ENCODE measurements at regions of chr9 and their contacts with region 1.

Region 1: GRCh38 chr9:104895572-104895971 is 32.4 kb downstream of the ABCA1 start:
- DNase-seq: peak; percentile 91
- H3K4me3 ChIP-seq: no peak overlapping the region
- H3K27ac ChIP-seq: peak overlapping the region; percentile 46
- H3K4me1 ChIP-seq: peaks cover 47% of the 10 kb centered on the region
- H3K27me3 ChIP-seq: no peaks in the 10 kb centered on the region
- CTCF ChIP-seq: no peak

Region 2: DNA sequence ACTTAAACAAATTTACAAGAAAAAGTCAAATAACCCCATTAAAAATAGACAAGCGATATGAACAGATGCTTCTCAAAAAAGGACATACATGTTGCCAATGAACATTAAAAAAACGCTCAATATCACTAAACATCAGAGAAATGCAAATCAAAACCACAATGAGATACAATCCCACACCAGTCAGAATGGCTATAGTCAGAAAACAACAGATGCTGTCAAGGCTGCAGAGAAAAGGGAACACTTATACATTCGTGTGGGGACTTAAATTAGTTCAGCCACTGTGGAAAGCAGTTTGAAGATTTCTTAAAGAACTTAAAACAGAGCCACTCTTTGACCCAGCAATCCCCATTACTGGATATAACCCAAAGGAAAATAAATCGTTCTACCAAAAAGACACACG is 380.7 kb before region 1 on chr9:
- CTCF ChIA-PET with region 1: no interaction called
- dilution Hi-C with region 1: no loop called
- in situ Hi-C with region 1: no loop called
- intact Hi-C with region 1: no loop called
- DNase-seq: no peak
- H3K4me3 ChIP-seq: no peak overlapping the region
- H3K27ac ChIP-seq: no peak overlapping the region
- H3K4me1 ChIP-seq: no peaks in the 10 kb centered on the region
- H3K27me3 ChIP-seq: no peaks in the 10 kb centered on the region
- CTCF ChIP-seq: no peak

Region 3: GRCh38 chr9:104795082-104795481 is 100.5 kb before region 1 on chr9:
- CTCF ChIA-PET with region 1: no interaction called
- dilution Hi-C with region 1: no loop called
- in situ Hi-C with region 1: no loop called
- intact Hi-C with region 1: no loop called
- DNase-seq: no peak
- H3K4me3 ChIP-seq: no peak overlapping the region
- H3K27ac ChIP-seq: no peak overlapping the region
- H3K4me1 ChIP-seq: no peaks in the 10 kb centered on the region
- H3K27me3 ChIP-seq: no peaks in the 10 kb centered on the region
- CTCF ChIP-seq: no peak

Region 4: GRCh38 chr9:104836235-104836634 is 59.3 kb before region 1 on chr9:
- CTCF ChIA-PET with region 1: no interaction called
- dilution Hi-C with region 1: no loop called
- in situ Hi-C with region 1: loop called in 1 of 2 experiments (anchors 10 kb)
- intact Hi-C with region 1: no loop called
- DNase-seq: no peak
- H3K4me3 ChIP-seq: no peak overlapping the region
- H3K27ac ChIP-seq: no peak overlapping the region
- H3K4me1 ChIP-seq: no peaks in the 10 kb centered on the region
- H3K27me3 ChIP-seq: no peaks in the 10 kb centered on the region
- CTCF ChIP-seq: no peak